A549 (cell line): ENCODE measurements at regions of chr1 and their contacts with region 1.

Region 1: DNA sequence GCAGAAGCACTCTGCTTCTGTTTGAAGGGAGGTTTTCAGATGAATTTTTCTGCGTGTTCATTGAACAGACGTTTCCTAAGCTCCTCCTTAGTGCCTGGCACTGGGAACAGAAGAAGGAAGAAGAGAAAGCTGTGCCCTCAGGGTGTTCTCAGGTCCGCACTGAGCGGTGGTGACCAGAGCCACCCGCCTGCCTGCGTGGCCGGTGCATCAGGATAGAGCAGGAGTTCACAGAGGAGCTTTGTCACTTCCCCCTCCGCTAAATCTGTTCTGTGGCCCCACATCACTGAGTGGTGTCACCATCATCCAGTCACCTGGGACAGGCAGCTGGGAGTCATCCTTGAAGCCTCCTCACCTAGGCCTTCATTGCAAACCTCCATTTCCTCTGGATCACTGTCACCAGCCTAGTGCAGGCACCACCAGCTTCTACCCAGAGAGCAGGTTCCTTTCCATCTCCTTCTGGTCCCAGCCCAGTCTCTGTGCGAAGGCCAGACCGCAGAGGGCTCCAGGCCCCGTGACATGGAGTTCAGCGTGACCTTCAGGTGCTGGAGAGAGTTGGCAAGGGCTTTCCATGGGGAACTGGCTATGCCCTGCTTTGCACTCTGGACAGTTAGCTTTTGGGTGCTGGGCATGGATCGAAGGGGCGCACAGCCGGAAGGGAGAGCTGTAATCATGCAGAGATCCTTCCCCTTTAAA is 21.7 kb downstream of the PARK7 start:
- DNase-seq: no peak
- ATAC-seq: no peak
- H3K4me3 ChIP-seq: no peak overlapping the region
- H3K27ac ChIP-seq: peak overlapping the region; percentile 63 to 72; a peak in 4 of 6 replicates
- H3K4me1 ChIP-seq: peaks cover 7% of the 10 kb centered on the region; the same call in 2 of the 3 replicates
- CTCF ChIP-seq: no peak
- EP300 ChIP-seq: no peak
- POLR2A ChIP-seq: no peak
- RAD21 ChIP-seq: no peak

Region 2: GRCh38 chr1:7418442-7419080 is 564.7 kb before region 1 on chr1:
- CTCF ChIA-PET with region 1: no interaction called
- POLR2A ChIA-PET with region 1: no interaction called
- DNase-seq: no peak
- ATAC-seq: no peak
- H3K4me3 ChIP-seq: no peak overlapping the region
- H3K27ac ChIP-seq: peak overlapping the region in 1 of 2 experiments; percentile 66; a peak in 4 of 6 replicates
- H3K4me1 ChIP-seq: 0 out of 3 replicates have a peak, but pooled peaks cover 8% of the 10 kb centered on the region
- CTCF ChIP-seq: no peak
- EP300 ChIP-seq: no peak
- POLR2A ChIP-seq: no peak
- RAD21 ChIP-seq: no peak

Region 3: GRCh38 chr1:7993593-7994479 is 10.6 kb after region 1 on chr1:
- CTCF ChIA-PET with region 1: interaction called, 10 read pairs
- POLR2A ChIA-PET with region 1: no interaction called
- DNase-seq: no peak
- ATAC-seq: no peak
- H3K4me3 ChIP-seq: no peak overlapping the region
- H3K27ac ChIP-seq: peak overlapping the region; percentile 11 to 49; a peak in 2 of 6 replicates
- H3K4me1 ChIP-seq: peaks cover 1% of the 10 kb centered on the region; the same call in 2 of the 3 replicates
- CTCF ChIP-seq: no peak
- EP300 ChIP-seq: no peak
- POLR2A ChIP-seq: no peak
- RAD21 ChIP-seq: no peak